RWPE1 (cell line): ENCODE measurements at regions of chr1 and their contacts with region 1.

Region 1: GRCh38 chr1:163069142-163069541 is at the start of gene RGS4:
- DNase-seq: peak; percentile 22
- H3K27ac ChIP-seq: no peak within 1 kb of the TSS
- CTCF ChIP-seq: no peak

Region 2: GRCh38 chr1:162878000-162878596 is 191.0 kb before region 1 on chr1:
- CTCF ChIA-PET with region 1: interaction called, 17 read pairs
- POLR2A ChIA-PET with region 1: no interaction called
- DNase-seq: peak; percentile 44
- H3K27ac ChIP-seq: no peak overlapping the region
- CTCF ChIP-seq: peak; percentile 60